GM12878 (cell line): ENCODE measurements at regions of chr19 and their contacts with region 1.

Region 1: DNA sequence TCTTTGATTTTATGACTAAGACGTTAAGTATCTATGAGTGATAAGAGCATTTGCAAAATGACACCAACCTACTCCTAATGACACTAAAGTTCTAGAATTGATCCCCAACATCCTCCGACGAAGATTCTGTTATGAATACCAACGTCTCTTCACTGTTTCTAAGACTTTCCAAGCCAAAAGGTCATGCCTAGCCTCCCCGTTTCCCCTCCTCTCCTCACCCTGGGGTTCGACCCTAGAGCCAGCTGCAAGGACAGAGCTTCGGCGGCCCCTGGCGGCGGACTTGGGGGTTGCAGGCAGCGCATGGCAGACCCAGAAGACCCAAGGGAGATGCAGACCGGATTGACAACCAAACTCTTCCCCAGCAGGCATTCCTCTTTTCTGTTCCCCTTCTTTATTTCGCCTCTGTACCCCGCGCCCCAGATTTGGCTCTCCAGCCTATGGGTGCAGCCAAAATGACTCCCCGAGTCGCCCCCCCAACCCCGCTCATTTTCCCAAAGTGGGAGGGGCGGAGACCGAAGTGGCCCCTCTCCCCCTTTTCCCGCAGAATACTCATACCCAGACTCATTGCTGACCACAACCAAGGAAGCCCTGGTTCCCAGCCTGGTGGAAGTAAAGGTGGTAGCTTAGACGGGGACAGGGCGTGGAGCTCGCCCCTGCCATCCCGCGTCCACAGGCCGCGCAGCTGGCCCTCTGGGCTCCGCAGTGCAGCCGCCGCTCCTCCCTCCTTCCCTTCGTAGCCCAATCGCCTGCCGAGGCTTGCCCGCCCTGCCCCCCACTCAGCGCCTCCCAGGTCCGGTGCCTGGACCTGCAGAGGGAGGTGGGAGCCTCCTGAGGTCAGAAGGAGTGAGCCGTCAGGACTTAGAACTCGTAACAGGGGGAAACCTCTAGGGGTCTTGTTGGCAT is 4.1 kb upstream of the EML2 start:
- DNase-seq: peak; percentile 84
- ATAC-seq: peak; percentile 38
- H3K4me3 ChIP-seq: peak overlapping the region; percentile 53
- H3K27ac ChIP-seq: peak overlapping the region; percentile 74
- H3K4me1 ChIP-seq: peaks cover 33% of the 10 kb centered on the region
- H3K27me3 ChIP-seq: no peaks in the 10 kb centered on the region
- CTCF ChIP-seq: peak; percentile 99 to 100 (median 99)
- EP300 ChIP-seq: peak in 1 of 2 experiments; percentile 17; a peak in 2 of 4 replicates
- POLR2A ChIP-seq: 0 out of 2 replicates have a peak, but pooled peaks have one; percentile 23
- RAD21 ChIP-seq: peak; percentile 99

Region 2: DNA sequence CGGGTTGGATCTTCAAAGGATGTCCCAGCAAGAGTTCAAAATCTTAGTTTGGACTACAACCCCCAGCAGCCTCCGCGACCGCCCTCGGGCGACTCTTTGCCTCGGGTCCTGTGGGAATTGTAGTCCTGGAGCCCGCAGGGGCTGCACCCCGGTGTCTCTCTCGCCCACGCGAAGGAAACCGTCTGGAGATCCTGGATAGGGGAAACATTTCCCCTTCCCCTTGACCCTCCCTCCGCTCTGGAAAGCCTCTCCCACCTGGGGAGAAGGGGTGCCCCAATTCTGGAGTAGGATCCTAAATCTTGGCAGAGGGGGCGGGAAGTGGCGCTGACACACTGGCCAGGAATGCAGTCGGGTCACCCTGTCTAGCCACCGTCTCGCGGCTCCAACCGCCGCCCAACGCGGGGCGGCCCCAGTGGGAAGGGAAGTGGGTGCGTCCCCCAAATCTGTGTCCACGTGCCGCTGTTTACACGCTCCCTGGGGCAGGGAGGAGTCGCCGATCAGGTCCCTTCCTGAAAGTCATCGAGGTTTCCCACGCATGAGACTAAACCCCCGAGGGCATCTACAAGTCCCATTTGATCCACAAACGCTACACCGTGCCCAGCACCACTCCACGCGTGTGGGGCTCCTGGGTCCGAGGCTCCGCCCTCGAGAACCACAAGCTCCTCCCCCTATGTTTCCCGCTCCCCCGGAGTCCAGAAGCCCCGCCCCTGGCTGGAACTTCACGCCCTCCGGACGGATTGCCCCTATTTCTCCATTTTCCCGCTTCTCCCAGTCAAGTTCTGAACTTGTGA is 237.6 kb before region 1 on chr19:
- CTCF ChIA-PET with region 1: no interaction called
- POLR2A ChIA-PET with region 1: no interaction called
- RAD21 ChIA-PET with region 1: interaction called, 3 read pairs
- SMC1A ChIA-PET with region 1: interaction called, 4 read pairs
- in situ Hi-C with region 1: no loop called
- intact Hi-C with region 1: loop called (anchors 10 kb)
- DNase-seq: peak; percentile 30
- ATAC-seq: peak; percentile 77
- H3K4me3 ChIP-seq: peak overlapping the region; percentile 98
- H3K27ac ChIP-seq: peak overlapping the region; percentile 89
- H3K4me1 ChIP-seq: peaks cover 4% of the 10 kb centered on the region
- H3K27me3 ChIP-seq: no peaks in the 10 kb centered on the region; a peak in 1 of 4 replicates
- CTCF ChIP-seq: no peak
- EP300 ChIP-seq: no peak
- POLR2A ChIP-seq: peak; percentile 45; the same call in 1 of the 2 replicates
- RAD21 ChIP-seq: no peak

Region 3: DNA sequence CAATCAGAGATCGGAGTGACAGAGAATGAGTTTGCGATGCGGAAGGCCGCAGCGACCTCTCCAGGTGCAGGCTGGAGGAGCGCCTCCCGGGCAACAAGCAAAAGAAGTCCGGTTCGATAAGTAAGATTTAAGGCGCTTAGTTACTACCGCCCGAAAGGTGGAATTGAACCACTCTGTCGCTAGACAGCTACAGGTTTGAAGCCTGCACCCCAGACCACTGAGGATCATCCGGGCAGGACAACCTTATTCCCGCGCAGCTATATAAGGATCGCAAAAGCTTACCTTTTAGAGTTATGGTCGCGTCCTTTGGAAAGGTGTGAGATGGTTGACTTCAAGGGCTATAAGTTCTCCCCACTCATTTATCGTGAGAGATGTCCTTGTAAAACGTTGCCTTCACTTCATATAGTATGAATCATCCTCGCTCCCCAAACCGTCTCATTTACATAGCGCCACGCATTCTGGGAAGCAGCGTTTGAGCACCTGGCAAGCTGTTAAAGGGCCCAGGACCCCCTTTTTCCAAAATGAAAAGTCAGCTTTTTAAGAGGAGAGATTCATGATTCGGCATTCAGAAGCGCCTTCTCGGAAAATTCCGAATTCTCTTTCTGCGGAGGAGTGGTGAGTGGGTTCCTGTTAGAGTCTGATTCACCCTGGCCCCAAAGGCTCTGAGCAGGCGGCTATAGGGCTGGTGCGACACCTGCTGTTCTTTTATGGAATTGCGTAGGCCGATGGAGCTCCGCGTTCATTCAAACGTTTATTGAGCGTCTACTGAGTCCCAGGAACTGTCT is 164.6 kb before region 1 on chr19:
- CTCF ChIA-PET with region 1: interaction called, 41 read pairs
- POLR2A ChIA-PET with region 1: interaction called, 5 read pairs
- RAD21 ChIA-PET with region 1: interaction called, 22 read pairs
- SMC1A ChIA-PET with region 1: interaction called, 21 read pairs
- in situ Hi-C with region 1: no loop called
- intact Hi-C with region 1: no loop called
- DNase-seq: peak; percentile 88
- ATAC-seq: peak; percentile 94
- H3K4me3 ChIP-seq: peak overlapping the region; percentile 72
- H3K27ac ChIP-seq: peak overlapping the region; percentile 98
- H3K4me1 ChIP-seq: peaks cover 5% of the 10 kb centered on the region
- H3K27me3 ChIP-seq: no peaks in the 10 kb centered on the region
- CTCF ChIP-seq: peak; percentile 94 to 98 (median 96)
- EP300 ChIP-seq: no peak
- POLR2A ChIP-seq: peak; percentile 74
- RAD21 ChIP-seq: peak; percentile 89

Region 4: DNA sequence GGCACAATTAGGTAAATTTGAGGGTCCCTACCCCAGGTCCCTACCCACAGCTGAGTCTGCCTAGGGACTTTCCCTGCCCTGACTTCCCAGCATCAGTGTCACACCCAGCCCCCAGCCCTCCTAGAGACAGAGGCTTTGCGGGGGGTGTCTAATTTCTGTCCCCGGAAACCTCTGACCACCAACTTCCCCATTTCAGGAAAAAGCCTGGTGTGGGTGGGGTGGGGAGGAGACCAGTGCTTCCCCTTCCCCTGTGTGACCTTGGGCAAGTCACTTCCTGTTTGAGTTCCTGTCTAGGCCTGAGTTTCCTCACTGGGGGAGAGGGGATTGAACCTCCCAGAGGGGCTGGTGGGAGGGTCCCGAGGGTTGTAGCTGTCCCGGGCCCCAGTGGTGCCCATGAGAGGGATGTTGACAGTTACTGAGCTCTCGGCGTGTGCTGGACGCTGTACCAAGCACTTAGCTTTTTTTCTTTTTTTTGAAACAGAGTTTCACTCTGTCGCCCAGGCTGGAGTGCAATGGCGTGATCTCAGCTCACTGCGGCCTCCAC is 128.1 kb before region 1 on chr19:
- CTCF ChIA-PET with region 1: interaction called, 18 read pairs
- POLR2A ChIA-PET with region 1: interaction called, 14 read pairs
- RAD21 ChIA-PET with region 1: interaction called, 16 read pairs
- SMC1A ChIA-PET with region 1: interaction called, 8 read pairs
- in situ Hi-C with region 1: loop called (anchors 10 kb)
- intact Hi-C with region 1: no loop called
- DNase-seq: peak; percentile 57
- ATAC-seq: peak; percentile 69
- H3K4me3 ChIP-seq: peak overlapping the region; percentile 32; the same call in 1 of the 2 replicates
- H3K27ac ChIP-seq: peak overlapping the region; percentile 75
- H3K4me1 ChIP-seq: peaks cover 39% of the 10 kb centered on the region
- H3K27me3 ChIP-seq: no peaks in the 10 kb centered on the region
- CTCF ChIP-seq: no peak
- EP300 ChIP-seq: peak in 1 of 2 experiments; percentile 15; a peak in 1 of 4 replicates
- POLR2A ChIP-seq: no peak
- RAD21 ChIP-seq: no peak

Region 5: DNA sequence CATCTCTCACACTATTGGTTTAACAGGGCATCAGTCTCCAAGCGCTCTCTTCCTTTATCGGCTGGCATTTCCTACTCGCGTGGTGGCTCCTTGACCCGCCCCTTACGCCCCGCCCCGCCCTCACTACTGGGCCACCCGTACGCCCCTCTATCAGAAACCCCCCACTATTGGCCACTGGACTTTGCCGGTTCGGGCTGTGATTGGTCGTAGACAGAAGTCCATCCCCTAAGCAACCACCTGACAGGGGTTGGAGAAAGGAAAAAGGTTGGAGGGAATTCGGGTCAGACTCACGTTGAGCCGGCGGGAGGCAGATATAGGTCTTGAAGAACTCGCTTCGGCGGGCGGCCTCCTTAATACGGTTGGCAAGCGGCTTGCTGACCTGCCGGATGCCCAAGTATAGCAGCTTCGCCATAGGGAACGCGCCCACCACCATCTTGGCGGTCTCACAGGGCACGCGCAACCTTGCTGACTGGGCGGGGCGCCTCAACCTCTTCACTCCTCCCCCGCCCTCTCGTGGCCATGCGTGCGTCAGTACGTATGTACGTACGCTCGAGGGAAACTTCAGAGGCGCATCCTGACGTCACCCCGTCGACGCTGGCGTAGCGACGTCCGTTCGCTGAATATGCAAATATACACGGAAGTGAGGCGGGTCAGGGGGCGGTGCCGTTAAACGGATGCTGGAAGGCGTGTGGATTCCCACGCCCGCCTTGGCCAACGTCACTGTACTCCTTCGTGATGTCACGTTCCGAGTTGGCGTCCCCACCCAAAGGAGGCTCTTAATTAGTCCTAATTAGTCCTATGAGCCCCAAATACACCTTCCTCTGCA is 58.7 kb before region 1 on chr19 and contains the start of gene OPA3:
- CTCF ChIA-PET with region 1: interaction called, 11 read pairs
- POLR2A ChIA-PET with region 1: interaction called, 8 read pairs
- RAD21 ChIA-PET with region 1: interaction called, 18 read pairs
- SMC1A ChIA-PET with region 1: interaction called, 3 read pairs
- in situ Hi-C with region 1: no loop called
- intact Hi-C with region 1: no loop called
- DNase-seq: peak; percentile 100
- ATAC-seq: peak; percentile 96
- H3K4me3 ChIP-seq: peak within 1 kb of the TSS; percentile 99
- H3K27ac ChIP-seq: peak within 1 kb of the TSS; percentile 85
- H3K4me1 ChIP-seq: peaks cover 6% of the 10 kb centered on the region; the same call in 1 of the 2 replicates
- H3K27me3 ChIP-seq: no peaks in the 10 kb centered on the region
- CTCF ChIP-seq: no peak
- EP300 ChIP-seq: peak in 1 of 2 experiments; percentile 58; a peak in 1 of 4 replicates
- POLR2A ChIP-seq: peak; percentile 93
- RAD21 ChIP-seq: no peak
- polyA plus RNA-seq, gene OPA3: 2.2 to 2.3 TPM

Region 6: GRCh38 chr19:45615795-45616708 is 27.2 kb before region 1 on chr19:
- CTCF ChIA-PET with region 1: interaction called, 43 read pairs
- POLR2A ChIA-PET with region 1: interaction called, 25 read pairs
- RAD21 ChIA-PET with region 1: interaction called, 27 read pairs
- SMC1A ChIA-PET with region 1: interaction called, 39 read pairs
- in situ Hi-C with region 1: no loop called
- intact Hi-C with region 1: loop called (anchors 2 kb)
- DNase-seq: peak; percentile 48
- ATAC-seq: peak; percentile 91
- H3K4me3 ChIP-seq: no peak overlapping the region
- H3K27ac ChIP-seq: no peak overlapping the region
- H3K4me1 ChIP-seq: peaks cover 18% of the 10 kb centered on the region
- H3K27me3 ChIP-seq: no peaks in the 10 kb centered on the region
- CTCF ChIP-seq: no peak
- EP300 ChIP-seq: no peak
- POLR2A ChIP-seq: 0 out of 2 replicates have a peak, but pooled peaks have one; percentile 29
- RAD21 ChIP-seq: no peak

Region 7: GRCh38 chr19:45692187-45693105 is 49.2 kb after region 1 on chr19 and contains the start of gene QPCTL:
- CTCF ChIA-PET with region 1: interaction called, 36 read pairs
- POLR2A ChIA-PET with region 1: interaction called, 6 read pairs
- RAD21 ChIA-PET with region 1: interaction called, 14 read pairs
- SMC1A ChIA-PET with region 1: interaction called, 7 read pairs
- in situ Hi-C with region 1: no loop called
- intact Hi-C with region 1: no loop called
- DNase-seq: peak; percentile 100
- ATAC-seq: peak; percentile 93
- H3K4me3 ChIP-seq: peak within 1 kb of the TSS; percentile 76
- H3K27ac ChIP-seq: peak within 1 kb of the TSS; percentile 82
- H3K4me1 ChIP-seq: peaks cover 10% of the 10 kb centered on the region
- H3K27me3 ChIP-seq: no peaks in the 10 kb centered on the region
- CTCF ChIP-seq: no peak
- EP300 ChIP-seq: peak; percentile 13 to 31; a peak in 1 of 4 replicates
- POLR2A ChIP-seq: peak; percentile 93
- RAD21 ChIP-seq: no peak
- polyA plus RNA-seq, gene QPCTL: 1.1 to 1.7 TPM